A673 (cell line): ENCODE measurements at regions of chr1 and their contacts with region 1.

Region 1: DNA sequence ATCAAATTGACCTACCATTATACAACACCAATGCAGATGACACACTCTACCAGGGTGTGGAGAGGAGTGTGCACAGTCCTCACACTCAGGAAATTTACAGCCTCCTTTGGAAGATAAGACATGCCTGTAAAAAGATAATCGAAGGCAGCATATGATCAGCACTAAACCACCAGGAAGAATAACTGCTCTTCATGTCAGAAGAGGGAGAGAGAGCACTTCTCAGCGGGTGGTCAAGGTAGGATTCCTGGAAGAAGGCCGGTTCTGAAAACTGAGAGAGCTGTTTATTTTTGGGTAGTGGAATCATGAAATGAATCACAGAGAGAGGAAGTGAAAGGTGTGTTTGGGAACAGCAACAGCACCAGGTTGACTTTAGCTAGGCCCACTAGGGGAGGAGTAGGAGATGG is 14.0 kb upstream of the ZNF697 start:
- DNase-seq: no peak
- H3K4me3 ChIP-seq: no peak overlapping the region
- H3K27ac ChIP-seq: no peak overlapping the region
- H3K4me1 ChIP-seq: peaks cover 3% of the 10 kb centered on the region
- H3K27me3 ChIP-seq: no peaks in the 10 kb centered on the region
- CTCF ChIP-seq: no peak

Region 2: GRCh38 chr1:119225831-119226230 is 436.2 kb before region 1 on chr1:
- CTCF ChIA-PET with region 1: no interaction called
- POLR2A ChIA-PET with region 1: no interaction called
- intact Hi-C with region 1: no loop called
- DNase-seq: peak; percentile 19
- H3K4me3 ChIP-seq: no peak overlapping the region
- H3K27ac ChIP-seq: no peak overlapping the region
- H3K4me1 ChIP-seq: peaks cover 13% of the 10 kb centered on the region
- H3K27me3 ChIP-seq: no peaks in the 10 kb centered on the region
- CTCF ChIP-seq: peak; percentile 56

Region 3: GRCh38 chr1:119587341-119587740 is 74.7 kb before region 1 on chr1:
- CTCF ChIA-PET with region 1: no interaction called
- POLR2A ChIA-PET with region 1: no interaction called
- intact Hi-C with region 1: loop called (anchors 2 kb)
- DNase-seq: peak; percentile 52
- H3K4me3 ChIP-seq: no peak overlapping the region
- H3K27ac ChIP-seq: no peak overlapping the region
- H3K4me1 ChIP-seq: no peaks in the 10 kb centered on the region
- H3K27me3 ChIP-seq: no peaks in the 10 kb centered on the region
- CTCF ChIP-seq: no peak

Region 4: GRCh38 chr1:119613769-119614720 is 48.0 kb before region 1 on chr1:
- CTCF ChIA-PET with region 1: interaction called, 4 read pairs
- POLR2A ChIA-PET with region 1: no interaction called
- intact Hi-C with region 1: loop called (anchors 1 kb)
- DNase-seq: peak; percentile 88
- H3K4me3 ChIP-seq: no peak overlapping the region
- H3K27ac ChIP-seq: no peak overlapping the region
- H3K4me1 ChIP-seq: no peaks in the 10 kb centered on the region
- H3K27me3 ChIP-seq: no peaks in the 10 kb centered on the region
- CTCF ChIP-seq: peak; percentile 75

Region 5: DNA sequence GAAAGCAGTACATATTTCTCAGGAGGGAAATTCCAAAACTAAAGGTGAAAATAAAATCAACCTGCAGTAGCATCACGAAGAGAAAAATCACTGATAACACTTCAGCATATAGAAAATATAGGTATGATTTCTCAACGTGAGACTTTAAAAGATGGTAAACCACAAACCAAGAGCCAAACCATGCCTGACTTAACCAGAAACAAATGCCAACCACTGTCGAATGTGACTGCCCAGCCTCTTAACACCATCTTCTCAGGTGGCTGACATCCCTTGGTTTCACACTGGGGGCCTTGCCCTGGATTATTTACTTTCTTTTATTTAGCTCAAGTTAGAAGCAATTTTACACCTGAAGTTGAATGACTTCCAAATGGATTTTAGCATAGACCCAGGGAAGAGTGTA is 96.5 kb after region 1 on chr1:
- CTCF ChIA-PET with region 1: no interaction called
- POLR2A ChIA-PET with region 1: no interaction called
- intact Hi-C with region 1: no loop called
- DNase-seq: no peak
- H3K4me3 ChIP-seq: no peak overlapping the region
- H3K27ac ChIP-seq: no peak overlapping the region
- H3K4me1 ChIP-seq: no peaks in the 10 kb centered on the region
- H3K27me3 ChIP-seq: no peaks in the 10 kb centered on the region
- CTCF ChIP-seq: no peak